ENCODE measurements at regions of chr12 and their contacts with region 1.

Region 1: DNA sequence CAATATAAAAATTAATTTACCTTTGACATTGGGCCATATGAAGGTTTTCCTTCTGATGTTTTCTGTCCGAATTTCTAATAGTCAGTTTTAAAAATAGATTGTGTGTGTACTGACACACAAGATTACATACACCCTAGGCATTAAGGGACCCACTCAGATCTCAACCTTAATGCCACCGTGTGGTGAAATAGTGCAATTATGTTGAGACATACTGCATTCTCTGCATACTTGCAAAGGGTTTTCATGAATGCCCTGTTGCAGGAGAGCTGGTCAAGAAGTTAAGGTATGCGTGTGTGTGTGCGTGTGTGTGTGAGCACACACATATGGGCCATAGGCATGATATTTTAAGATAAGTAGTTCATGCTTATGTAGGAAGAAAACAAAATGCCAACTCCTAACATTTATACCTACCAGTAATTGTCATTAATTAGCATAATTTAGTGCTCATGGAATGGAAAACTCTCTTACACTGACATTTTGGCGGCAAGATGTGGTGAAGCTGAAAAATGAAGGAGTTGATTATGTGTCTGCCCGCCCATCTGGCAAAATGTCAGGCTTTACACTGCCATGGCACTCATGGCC is 58.8 kb downstream of the PIK3C2G start:
- DNase-seq: peak; percentile 47
- ATAC-seq: peak; percentile 99
- H3K4me3 ChIP-seq: no peak overlapping the region
- H3K27ac ChIP-seq: no peak overlapping the region
- H3K4me1 ChIP-seq: no peaks in the 10 kb centered on the region
- H3K27me3 ChIP-seq: no peaks in the 10 kb centered on the region
- CTCF ChIP-seq: peak; percentile 47 to 57 (median 49); a peak in 5 of 6 replicates
- POLR2A ChIP-seq: no peak
- RAD21 ChIP-seq: peak; percentile 41

Region 2: DNA sequence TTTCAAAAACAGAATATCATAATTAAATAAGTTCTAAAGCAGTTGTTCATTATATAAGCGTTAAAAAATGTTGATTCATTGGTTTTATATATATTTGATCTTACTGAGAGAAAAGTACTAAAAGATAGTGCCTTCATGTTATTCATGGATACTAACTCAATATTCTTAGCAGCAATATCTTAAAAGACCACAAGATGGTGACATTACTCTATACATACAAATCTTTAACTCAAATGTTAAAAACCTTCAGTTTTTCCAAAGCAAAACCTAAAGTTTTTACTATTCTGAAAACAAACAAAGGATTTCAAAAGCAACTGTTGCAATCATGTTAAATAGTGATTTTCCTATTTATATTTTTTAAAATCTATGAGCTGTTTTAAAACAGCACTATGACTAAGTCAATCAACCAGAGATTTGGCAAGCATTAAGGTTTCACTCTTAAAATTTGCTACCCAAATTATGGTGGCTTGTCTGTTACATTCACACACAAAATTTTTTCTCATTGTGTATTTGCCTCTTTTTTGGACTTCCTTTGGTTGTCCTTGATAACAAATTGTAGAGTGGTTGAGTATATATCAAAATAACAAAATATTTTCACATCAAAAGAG is 180.0 kb before region 1 on chr12:
- CTCF ChIA-PET with region 1: interaction called, 9 read pairs
- POLR2A ChIA-PET with region 1: no interaction called
- RAD21 ChIA-PET with region 1: no interaction called
- intact Hi-C with region 1: loop called (anchors 5 kb)
- DNase-seq: no peak
- ATAC-seq: no peak
- H3K4me3 ChIP-seq: no peak overlapping the region
- H3K27ac ChIP-seq: no peak overlapping the region
- H3K4me1 ChIP-seq: peaks cover 0 to 8% of the 10 kb centered on the region in 2 experiments; a peak in 2 of 4 replicates
- H3K27me3 ChIP-seq: no peaks in the 10 kb centered on the region
- CTCF ChIP-seq: peak; percentile 28 to 70 (median 37); a peak in 4 of 6 replicates
- POLR2A ChIP-seq: no peak
- RAD21 ChIP-seq: peak; percentile 62

Region 3: GRCh38 chr12:18250313-18250916 is 69.7 kb before region 1 on chr12:
- CTCF ChIA-PET with region 1: interaction called, 28 read pairs
- POLR2A ChIA-PET with region 1: no interaction called
- RAD21 ChIA-PET with region 1: interaction called, 3 to 5 read pairs
- intact Hi-C with region 1: loop called (anchors 1 kb)
- DNase-seq: peak; percentile 54
- ATAC-seq: peak; percentile 57; the same call in 1 of the 2 replicates
- H3K4me3 ChIP-seq: no peak overlapping the region
- H3K27ac ChIP-seq: no peak overlapping the region
- H3K4me1 ChIP-seq: no peaks in the 10 kb centered on the region
- H3K27me3 ChIP-seq: no peaks in the 10 kb centered on the region
- CTCF ChIP-seq: peak; percentile 55 to 71 (median 58); a peak in 5 of 6 replicates
- POLR2A ChIP-seq: no peak
- RAD21 ChIP-seq: peak; percentile 74